Aorta (tissue), 5 donors: ENCODE measurements at regions of chr4 and their contacts with region 1.

Region 1: GRCh38 chr4:15681207-15682015 is at the start of gene FAM200B:
- DNase-seq: peak; percentile 99 to 100
- ATAC-seq: peak; percentile 100
- H3K4me3 ChIP-seq: peak within 1 kb of the TSS; percentile 72 to 93
- H3K27ac ChIP-seq: peak within 1 kb of the TSS in 1 of 2 donors; percentile 89
- H3K4me1 ChIP-seq: peaks cover 0 to 6% of the 10 kb centered on the region in 2 donors
- H3K27me3 ChIP-seq: no peaks in the 10 kb centered on the region
- total RNA-seq, gene FAM200B: 23.0 to 35.6 TPM

Region 2: GRCh38 chr4:15655229-15656037 is 26.0 kb before region 1 on chr4 and contains the start of gene FBXL5:
- intact Hi-C with region 1: loop called in 1 of 2 experiments (anchors 2 kb)
- DNase-seq: peak; percentile 86 to 92
- ATAC-seq: peak; percentile 94
- H3K4me3 ChIP-seq: peak within 1 kb of the TSS; percentile 89 to 93
- H3K27ac ChIP-seq: peak within 1 kb of the TSS; percentile 96 to 100
- H3K4me1 ChIP-seq: peaks cover 0 to 6% of the 10 kb centered on the region in 2 donors
- H3K27me3 ChIP-seq: no peaks in the 10 kb centered on the region
- total RNA-seq, gene FBXL5: 69.3 to 81.1 TPM

Region 3: GRCh38 chr4:15805583-15806517 is 124.4 kb after region 1 on chr4:
- intact Hi-C with region 1: no loop called
- DNase-seq: no peak
- ATAC-seq: peak; percentile 66
- H3K4me3 ChIP-seq: no peak overlapping the region
- H3K27ac ChIP-seq: no peak overlapping the region
- H3K4me1 ChIP-seq: no peaks in the 10 kb centered on the region
- H3K27me3 ChIP-seq: no peaks in the 10 kb centered on the region